Activated T-helper 1 cell treated with anti-CD3 and anti-CD28 coated beads, Interleukin-12 subunit alpha, Interleukin-12 subunit beta, Interleukin-2, Interleukin-4 antibody, amounts not matched to agents 30 ng/mL and 10 ng/mL and 1 ng/mL, durations not matched to agents 14 hours and 24 hours and 36 hours (primary cell): ENCODE measurements at regions of chr5 and their contacts with region 1.

Region 1: GRCh38 chr5:77630258-77631089 is 8.0 kb downstream of the OTP start:
- DNase-seq: peak; percentile 20
- H3K4me3 Mint-ChIP-seq: peak overlapping the region; percentile 72
- H3K27ac Mint-ChIP-seq: peak overlapping the region; percentile 72
- H3K4me1 Mint-ChIP-seq: peaks cover 28% of the 10 kb centered on the region
- H3K27me3 Mint-ChIP-seq: peaks cover 75% of the 10 kb centered on the region

Region 2: DNA sequence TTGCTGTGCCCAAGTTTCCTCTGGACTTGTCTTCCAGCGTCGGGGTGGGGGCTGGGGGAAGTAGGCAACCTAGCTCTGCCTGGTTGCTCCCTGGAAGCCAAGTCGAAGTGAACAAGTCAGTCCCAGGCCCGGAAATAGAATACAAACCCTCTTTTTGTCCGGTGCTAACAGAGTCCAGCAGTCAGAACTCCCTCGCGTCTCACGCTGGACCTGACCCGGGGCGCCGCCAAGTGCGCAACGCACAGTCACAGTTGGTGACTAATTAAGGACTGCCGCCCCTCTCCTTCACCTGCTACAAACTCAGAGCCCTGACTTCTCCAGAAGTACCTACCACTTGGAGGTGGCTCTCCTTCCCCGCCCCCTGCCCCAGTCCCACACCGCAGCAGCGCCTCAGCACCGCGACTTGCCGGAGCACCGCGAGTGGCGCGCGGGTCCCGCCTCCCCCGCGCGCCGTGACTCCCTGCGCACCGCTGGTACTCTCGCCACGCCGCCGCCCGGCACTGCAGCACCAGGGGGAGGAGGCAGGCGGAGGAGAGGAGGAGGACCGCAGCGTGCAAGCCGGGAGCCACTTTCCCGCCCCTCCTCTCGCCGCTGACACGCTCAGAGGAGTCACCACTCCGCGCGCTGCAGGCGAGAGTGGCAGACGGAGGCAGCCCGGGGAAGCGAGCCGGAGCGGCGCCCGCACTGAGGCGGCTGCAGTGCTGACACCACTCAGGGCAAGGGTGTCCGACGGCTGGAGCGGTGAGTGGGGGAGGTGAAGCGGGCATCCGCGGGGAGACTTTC is 1547.5 kb before region 1 on chr5 and contains the start of gene SV2C:
- intact Hi-C with region 1: loop called (anchors 10 kb)
- DNase-seq: no peak
- H3K4me3 Mint-ChIP-seq: peak within 1 kb of the TSS; percentile 79
- H3K27ac Mint-ChIP-seq: peak within 1 kb of the TSS; percentile 26
- H3K4me1 Mint-ChIP-seq: peaks cover 14% of the 10 kb centered on the region
- H3K27me3 Mint-ChIP-seq: peaks cover 73% of the 10 kb centered on the region
- total RNA-seq, gene SV2C: 0.05 TPM in 1 of 2 replicates, not detected in the other

Region 3: DNA sequence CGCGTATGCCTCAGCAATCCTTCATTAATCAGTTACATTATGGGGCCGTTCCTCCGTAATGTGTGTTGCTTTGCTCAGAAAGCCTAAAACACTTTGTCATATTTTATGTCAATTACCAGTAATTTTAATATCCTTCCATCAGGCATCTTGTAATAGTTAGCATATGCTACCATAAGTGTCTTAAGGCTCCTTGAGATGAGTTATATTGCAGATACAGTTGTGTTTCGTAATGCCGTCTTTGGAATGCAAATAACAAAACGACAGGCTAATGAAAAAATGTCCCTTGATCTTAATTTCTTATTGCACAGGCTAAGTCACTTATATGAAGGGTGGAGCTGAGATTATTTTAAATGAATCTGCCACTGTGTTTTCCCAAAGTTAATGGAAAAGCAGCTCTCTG is 95.1 kb after region 1 on chr5:
- intact Hi-C with region 1: no loop called
- DNase-seq: no peak
- H3K4me3 Mint-ChIP-seq: no peak overlapping the region
- H3K27ac Mint-ChIP-seq: no peak overlapping the region
- H3K4me1 Mint-ChIP-seq: no peaks in the 10 kb centered on the region
- H3K27me3 Mint-ChIP-seq: no peaks in the 10 kb centered on the region